ENCODE measurements at regions of chr11 and their contacts with region 1.

Region 1: GRCh38 chr11:61792310-61793085 is at the starts of genes FEN1 and TMEM258:
- DNase-seq: peak; percentile 91
- H3K4me3 Mint-ChIP-seq: peak within 1 kb of the TSS; percentile 97
- H3K27ac Mint-ChIP-seq: peak within 1 kb of the TSS; percentile 100
- H3K4me1 Mint-ChIP-seq: peaks cover 42% of the 10 kb centered on the region
- H3K27me3 Mint-ChIP-seq: no peaks in the 10 kb centered on the region
- total RNA-seq, gene FEN1: 74.7 to 75.9 TPM
- total RNA-seq, gene TMEM258: 166 to 167 TPM

Region 2: GRCh38 chr11:61429691-61430582 is 362.6 kb before region 1 on chr11 and contains the starts of genes CPSF7 and SDHAF2:
- CTCF ChIA-PET with region 1: interaction called, 5 read pairs
- intact Hi-C with region 1: loop called (anchors 5 kb)
- DNase-seq: peak; percentile 98
- H3K4me3 Mint-ChIP-seq: peak within 1 kb of the TSS; percentile 98
- H3K27ac Mint-ChIP-seq: peak within 1 kb of the TSS; percentile 97
- H3K4me1 Mint-ChIP-seq: peaks cover 65% of the 10 kb centered on the region
- H3K27me3 Mint-ChIP-seq: no peaks in the 10 kb centered on the region
- total RNA-seq, gene CPSF7: 106 to 108 TPM
- total RNA-seq, gene SDHAF2: 23.7 to 27.0 TPM

Region 3: DNA sequence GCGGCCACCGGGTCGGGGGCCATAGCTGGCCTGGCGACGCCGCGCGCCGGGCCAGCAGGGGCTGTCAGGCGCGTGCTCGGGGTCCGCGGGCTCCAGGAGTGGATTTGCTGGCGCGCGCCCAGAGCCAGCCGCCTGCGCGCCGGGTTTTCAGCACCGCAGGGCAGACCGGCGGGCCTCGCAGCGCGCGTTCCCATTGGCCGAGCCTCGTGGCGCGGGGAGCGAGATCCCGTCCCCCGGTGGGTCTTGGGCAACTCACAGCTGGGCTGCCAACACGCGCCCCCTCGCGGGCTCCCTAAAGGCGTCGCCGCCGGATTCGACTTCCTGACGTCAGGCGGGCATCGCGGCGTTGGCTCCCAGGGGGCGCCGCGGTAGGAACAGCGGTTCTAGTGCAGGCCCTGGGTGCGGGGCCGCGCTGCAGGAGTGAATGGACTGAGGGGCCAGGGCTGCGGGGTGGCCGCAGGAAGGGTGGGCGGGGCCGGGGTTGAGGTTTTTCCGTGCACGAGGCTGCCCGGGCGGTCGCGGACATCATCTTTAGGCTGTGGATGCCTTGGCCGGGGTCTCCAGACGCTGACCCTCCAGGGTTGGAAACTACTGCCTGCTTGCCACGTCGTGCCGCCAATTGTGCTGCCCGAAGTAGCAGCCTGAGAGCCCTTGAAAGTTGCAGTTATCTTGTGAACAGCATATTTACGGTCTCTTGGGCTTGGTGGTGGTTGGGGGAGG is 24.4 kb after region 1 on chr11 and contains the start of gene FADS1:
- CTCF ChIA-PET with region 1: interaction called, 38 read pairs
- intact Hi-C with region 1: loop called (anchors 1 kb)
- DNase-seq: peak; percentile 90
- H3K4me3 Mint-ChIP-seq: peak within 1 kb of the TSS; percentile 91
- H3K27ac Mint-ChIP-seq: no peak within 1 kb of the TSS
- H3K4me1 Mint-ChIP-seq: peaks cover 10% of the 10 kb centered on the region
- H3K27me3 Mint-ChIP-seq: peaks cover 26% of the 10 kb centered on the region
- total RNA-seq, gene FADS1: 12.1 to 12.8 TPM

Region 4: DNA sequence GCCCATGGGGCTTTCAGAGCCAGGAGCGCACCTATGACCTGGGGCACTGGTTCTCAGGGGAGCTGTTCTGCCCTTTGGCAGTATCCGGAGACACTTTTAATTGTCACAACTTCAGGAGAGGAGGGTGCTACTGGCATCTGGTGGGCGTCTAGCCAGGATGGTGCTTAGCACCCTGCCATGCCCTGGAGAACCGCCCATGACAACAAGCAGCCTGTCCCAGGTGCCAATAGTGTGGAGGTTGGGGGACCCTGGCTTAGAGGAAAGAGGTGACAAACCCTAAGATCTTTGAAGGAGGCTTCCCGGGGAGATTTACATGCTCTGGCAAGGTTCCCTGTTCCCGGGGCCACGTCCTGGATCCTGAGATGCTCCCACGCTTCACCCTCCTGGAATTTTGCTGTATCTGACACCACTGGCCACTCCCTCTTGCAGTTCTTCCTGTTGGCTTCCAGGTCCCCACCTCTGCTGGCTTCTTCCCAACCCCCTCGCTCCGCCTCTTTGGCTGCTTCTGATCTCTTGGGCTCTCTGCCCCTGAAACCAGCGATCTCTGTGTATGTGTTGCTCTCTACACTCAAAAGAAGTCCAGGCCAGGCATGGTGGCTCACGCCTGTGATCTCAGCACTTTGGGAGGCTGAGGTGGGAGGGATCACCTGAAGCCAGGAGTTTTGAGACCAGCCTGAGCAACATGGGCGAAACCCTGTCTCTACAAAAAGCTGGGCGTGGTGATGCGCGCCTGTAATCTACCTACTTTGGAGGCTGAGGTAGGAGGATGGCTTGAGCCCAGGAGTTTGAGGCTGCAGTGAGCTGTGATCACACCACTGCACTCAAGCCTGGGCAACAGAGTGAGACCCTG is 67.8 kb after region 1 on chr11:
- CTCF ChIA-PET with region 1: no interaction called
- intact Hi-C with region 1: no loop called
- DNase-seq: no peak
- H3K4me3 Mint-ChIP-seq: no peak overlapping the region
- H3K27ac Mint-ChIP-seq: no peak overlapping the region
- H3K4me1 Mint-ChIP-seq: no peaks in the 10 kb centered on the region
- H3K27me3 Mint-ChIP-seq: no peaks in the 10 kb centered on the region

Region 5: GRCh38 chr11:61891331-61892084 is 99.0 kb after region 1 on chr11 and contains the start of gene FADS3:
- CTCF ChIA-PET with region 1: no interaction called
- intact Hi-C with region 1: loop called (anchors 1 kb)
- DNase-seq: peak; percentile 49
- H3K4me3 Mint-ChIP-seq: peak within 1 kb of the TSS; percentile 68
- H3K27ac Mint-ChIP-seq: no peak within 1 kb of the TSS
- H3K4me1 Mint-ChIP-seq: peaks cover 10% of the 10 kb centered on the region
- H3K27me3 Mint-ChIP-seq: no peaks in the 10 kb centered on the region
- total RNA-seq, gene FADS3: 4.2 to 4.3 TPM

Region 6: DNA sequence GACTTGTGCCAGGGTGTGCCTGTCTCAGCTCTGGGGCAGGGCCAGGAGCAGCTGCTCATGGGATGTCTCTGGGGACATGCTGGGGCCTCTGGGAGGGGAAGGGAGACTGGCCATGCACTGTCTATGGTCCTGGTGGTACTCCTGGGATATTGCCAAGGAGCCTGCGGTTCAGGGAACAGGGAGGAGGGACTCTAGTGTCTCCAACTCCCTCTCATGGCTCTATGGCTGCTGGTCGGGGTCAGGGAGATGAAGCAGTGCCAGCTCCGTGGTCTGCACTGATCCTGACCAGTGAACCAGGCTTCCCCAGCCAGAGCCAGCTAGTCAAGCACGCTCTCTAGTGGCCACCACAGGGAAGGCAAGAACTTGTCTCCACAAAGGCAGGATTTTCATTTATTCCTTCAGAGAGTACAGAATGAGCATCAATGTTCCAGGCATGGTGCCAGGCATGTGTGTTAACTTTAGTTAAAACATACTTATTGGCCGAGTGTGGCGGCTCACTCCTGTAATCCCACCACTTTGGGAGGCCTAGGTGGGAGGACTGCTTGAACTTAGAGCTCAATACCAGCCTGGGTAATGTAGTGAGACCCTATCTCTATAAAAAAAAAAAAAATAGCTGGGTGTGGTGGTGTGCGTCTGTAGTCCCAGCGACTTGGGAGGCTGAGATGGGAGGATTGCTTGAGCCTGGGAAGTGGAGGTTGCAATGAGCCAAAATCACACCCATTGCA is 155.2 kb after region 1 on chr11:
- CTCF ChIA-PET with region 1: interaction called, 22 read pairs
- intact Hi-C with region 1: loop called (anchors 2 kb)
- DNase-seq: peak; percentile 86
- H3K4me3 Mint-ChIP-seq: no peak overlapping the region
- H3K27ac Mint-ChIP-seq: no peak overlapping the region
- H3K4me1 Mint-ChIP-seq: peaks cover 7% of the 10 kb centered on the region
- H3K27me3 Mint-ChIP-seq: no peaks in the 10 kb centered on the region

Region 7: GRCh38 chr11:62025487-62026105 is 233.1 kb after region 1 on chr11:
- CTCF ChIA-PET with region 1: no interaction called
- intact Hi-C with region 1: loop called (anchors 2 kb)
- DNase-seq: peak; percentile 86
- H3K4me3 Mint-ChIP-seq: peak overlapping the region; percentile 55
- H3K27ac Mint-ChIP-seq: peak overlapping the region; percentile 89
- H3K4me1 Mint-ChIP-seq: peaks cover 17% of the 10 kb centered on the region
- H3K27me3 Mint-ChIP-seq: no peaks in the 10 kb centered on the region

Region 8: DNA sequence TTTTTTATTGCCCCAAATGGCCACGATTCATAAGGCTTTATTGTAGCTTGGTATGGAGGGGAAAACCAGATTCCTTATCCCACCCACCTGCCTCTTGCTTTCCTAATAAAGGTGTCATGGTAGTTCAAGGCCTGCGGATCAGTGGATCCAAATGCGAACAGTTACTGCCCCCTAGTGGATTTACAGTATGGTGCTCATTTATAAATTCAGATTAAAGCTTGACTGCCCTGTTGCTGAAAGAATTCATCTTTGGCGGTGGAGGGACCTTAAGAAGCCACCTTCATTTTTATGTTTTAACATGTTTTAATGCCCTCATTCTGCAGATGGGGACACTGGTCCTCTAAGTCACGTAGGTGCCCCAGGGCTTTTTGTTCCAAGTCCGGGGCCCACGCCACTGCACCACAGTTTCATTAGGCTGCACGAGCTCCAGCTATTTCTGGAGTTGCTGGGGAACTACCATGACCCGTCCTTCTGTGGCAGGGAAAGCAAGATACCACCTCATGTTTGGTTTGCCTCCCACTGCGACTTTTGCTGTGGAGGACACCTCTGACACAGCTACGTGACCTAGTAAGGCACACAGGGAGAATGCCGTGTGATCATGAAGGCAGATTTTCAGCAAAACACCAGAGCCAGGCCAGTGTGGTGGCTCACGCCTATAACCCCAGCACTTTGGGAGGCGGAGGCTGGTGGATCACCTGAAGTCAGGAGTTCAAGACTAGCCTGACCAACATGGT is 315.7 kb after region 1 on chr11:
- CTCF ChIA-PET with region 1: interaction called, 11 read pairs
- intact Hi-C with region 1: loop called (anchors 5 kb)
- DNase-seq: peak; percentile 59
- H3K4me3 Mint-ChIP-seq: no peak overlapping the region
- H3K27ac Mint-ChIP-seq: no peak overlapping the region
- H3K4me1 Mint-ChIP-seq: peaks cover 19% of the 10 kb centered on the region
- H3K27me3 Mint-ChIP-seq: no peaks in the 10 kb centered on the region

Measured in activated naive CD4-positive, alpha-beta T cell treated with anti-CD3 and anti-CD28 coated beads for 36 hours (primary cell).